Sigmoid colon (tissue), 7 donors: ENCODE measurements at regions of chr1 and their contacts with region 1.

Region 1: GRCh38 chr1:46247436-46248121 is at the start of gene RAD54L:
- DNase-seq: peak; percentile 99
- H3K4me3 ChIP-seq: peak within 1 kb of the TSS; percentile 41 to 68 (median 64)
- H3K27ac ChIP-seq: peak within 1 kb of the TSS; percentile 41 to 65 (median 61)
- H3K4me1 ChIP-seq: peaks cover 0 to 15% (median 14%) of the 10 kb centered on the region in 4 donors
- H3K27me3 ChIP-seq: no peaks in the 10 kb centered on the region
- CTCF ChIP-seq: no peak
- EP300 ChIP-seq: no peak
- POLR2A ChIP-seq: no peak
- total RNA-seq, gene RAD54L: not detected

Region 2: DNA sequence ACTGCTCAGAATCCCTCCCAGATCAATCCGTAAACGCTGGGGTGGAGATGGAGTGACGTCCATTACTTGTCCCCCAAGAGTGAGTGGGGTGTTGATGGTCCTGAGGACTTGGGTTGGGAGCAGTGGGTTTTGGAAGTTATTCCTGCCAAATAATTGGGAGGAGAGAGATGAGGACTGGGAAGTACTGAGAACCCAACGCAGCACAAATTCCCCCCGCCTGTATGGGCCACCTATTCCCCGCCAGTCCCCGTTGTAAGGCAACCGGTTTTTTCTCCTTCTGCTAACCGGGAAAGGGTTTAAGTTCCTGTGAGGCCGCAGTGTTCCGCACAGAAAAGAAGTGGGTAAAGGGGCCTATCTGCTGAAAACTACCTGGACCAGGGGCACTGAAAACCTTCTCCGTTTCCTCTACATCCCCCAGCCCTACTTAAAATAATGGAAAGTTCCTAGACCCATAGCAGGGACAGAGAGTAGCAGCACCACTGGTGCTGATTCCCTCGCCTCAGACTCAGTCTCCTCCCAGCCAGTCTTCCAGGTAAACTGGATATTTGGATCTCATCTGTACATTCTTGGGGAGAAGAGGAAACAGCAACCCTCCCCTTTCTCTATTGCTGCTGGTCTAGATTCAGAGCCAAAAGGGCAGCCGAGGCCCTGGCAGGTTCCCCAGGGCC is 43.7 kb before region 1 on chr1:
- intact Hi-C with region 1: loop called (anchors 2 kb)
- DNase-seq: no peak
- H3K4me3 ChIP-seq: peak overlapping the region; percentile 66 to 87 (median 73)
- H3K27ac ChIP-seq: peak overlapping the region; percentile 80 to 90 (median 85)
- H3K4me1 ChIP-seq: peaks cover 0 to 35% (median 27%) of the 10 kb centered on the region in 4 donors
- H3K27me3 ChIP-seq: no peaks in the 10 kb centered on the region
- CTCF ChIP-seq: no peak
- EP300 ChIP-seq: no peak
- POLR2A ChIP-seq: no peak

Region 3: DNA sequence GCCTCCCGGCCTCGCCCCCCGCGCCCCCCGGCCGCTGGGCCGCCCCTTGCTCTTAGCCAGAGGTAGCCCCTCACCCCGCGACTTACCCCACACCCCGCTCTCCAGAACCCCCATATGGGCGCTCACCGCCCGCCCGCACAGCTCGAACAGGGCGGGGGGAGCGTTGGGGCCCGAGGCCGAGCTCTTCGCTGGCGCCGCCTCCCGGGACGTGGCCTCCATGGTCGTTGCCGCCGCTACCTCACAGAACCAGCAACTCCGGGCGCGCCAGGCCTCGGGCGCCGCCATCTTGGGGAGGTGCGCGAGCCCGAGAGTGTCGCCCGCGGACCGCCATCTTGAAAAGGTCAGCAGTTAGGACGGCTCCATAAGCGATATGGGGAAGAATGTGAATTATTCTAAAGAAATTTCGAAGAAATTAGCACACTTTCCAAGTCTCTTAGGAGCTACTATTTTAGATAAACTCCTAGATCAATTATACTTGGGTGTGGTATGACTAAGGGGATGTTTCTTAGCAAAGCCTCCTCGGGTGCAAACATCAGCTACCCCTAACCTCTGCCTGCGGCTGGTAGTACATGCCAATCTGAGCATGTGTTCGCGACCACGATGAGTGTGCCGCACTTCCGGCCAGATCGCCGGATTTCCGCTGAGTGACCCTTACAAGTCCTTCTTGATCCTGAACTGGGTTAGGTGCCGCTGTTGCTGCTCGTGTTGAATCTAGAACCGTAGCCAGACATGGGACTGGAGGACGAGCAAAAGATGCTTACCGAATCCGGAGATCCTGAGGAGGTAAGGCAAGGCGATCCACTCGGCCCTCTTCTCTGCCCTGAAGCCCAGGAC is 55.7 kb after region 1 on chr1 and contains the starts of genes LRRC41 and UQCRH:
- intact Hi-C with region 1: loop called (anchors 1 kb)
- DNase-seq: peak; percentile 98
- H3K4me3 ChIP-seq: peak within 1 kb of the TSS; percentile 64 to 98 (median 83)
- H3K27ac ChIP-seq: peak within 1 kb of the TSS; percentile 92 to 99 (median 98)
- H3K4me1 ChIP-seq: peaks cover 0 to 74% (median 63%) of the 10 kb centered on the region in 4 donors
- H3K27me3 ChIP-seq: no peaks in the 10 kb centered on the region
- CTCF ChIP-seq: peak in 1 of 4 experiments; percentile 9
- EP300 ChIP-seq: no peak
- POLR2A ChIP-seq: peak; percentile 80 to 81
- total RNA-seq, gene LRRC41: 55.1 to 65.2 (median 64.3) TPM
- total RNA-seq, gene UQCRH: 414 to 610 (median 491) TPM

Region 4: GRCh38 chr1:46315669-46316403 is 68.3 kb after region 1 on chr1:
- intact Hi-C with region 1: no loop called
- DNase-seq: no peak
- H3K4me3 ChIP-seq: no peak overlapping the region
- H3K27ac ChIP-seq: no peak overlapping the region
- H3K4me1 ChIP-seq: no peaks in the 10 kb centered on the region
- H3K27me3 ChIP-seq: no peaks in the 10 kb centered on the region
- CTCF ChIP-seq: no peak
- EP300 ChIP-seq: no peak
- POLR2A ChIP-seq: no peak